Mammary epithelial cell (primary cell): ENCODE measurements at regions of chr6 and their contacts with region 1.

Region 1: DNA sequence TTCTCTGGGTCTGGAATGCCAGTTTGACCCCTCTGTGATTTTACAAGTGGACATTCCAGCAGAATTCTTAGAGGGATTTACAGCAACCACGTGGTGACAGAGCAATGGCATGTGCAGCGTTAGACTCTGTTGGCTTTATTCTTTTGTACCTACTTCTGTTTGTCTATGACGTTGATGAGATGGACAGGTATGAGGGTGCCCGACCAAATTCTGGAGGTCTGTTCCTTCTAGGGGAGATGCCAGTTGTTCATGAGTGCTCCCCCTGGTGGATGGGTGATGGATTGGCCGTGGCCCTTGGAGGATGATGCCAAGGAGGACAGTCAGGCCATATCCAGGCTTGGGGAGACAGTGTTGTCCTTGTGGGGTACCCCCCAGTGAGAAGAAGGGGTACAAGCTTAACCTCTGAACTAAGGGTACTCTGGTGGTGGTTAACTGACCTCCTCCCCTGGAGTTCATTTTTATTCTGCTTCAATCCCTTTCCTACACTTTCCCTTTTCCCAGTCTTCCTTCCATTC is 198.6 kb downstream of the DTNBP1 start:
- DNase-seq: no peak
- H3K4me3 ChIP-seq: no peak overlapping the region
- H3K27ac ChIP-seq: no peak overlapping the region
- H3K4me1 ChIP-seq: no peaks in the 10 kb centered on the region
- H3K27me3 ChIP-seq: no peaks in the 10 kb centered on the region
- CTCF ChIP-seq: peak; percentile 75 to 76

Region 2: DNA sequence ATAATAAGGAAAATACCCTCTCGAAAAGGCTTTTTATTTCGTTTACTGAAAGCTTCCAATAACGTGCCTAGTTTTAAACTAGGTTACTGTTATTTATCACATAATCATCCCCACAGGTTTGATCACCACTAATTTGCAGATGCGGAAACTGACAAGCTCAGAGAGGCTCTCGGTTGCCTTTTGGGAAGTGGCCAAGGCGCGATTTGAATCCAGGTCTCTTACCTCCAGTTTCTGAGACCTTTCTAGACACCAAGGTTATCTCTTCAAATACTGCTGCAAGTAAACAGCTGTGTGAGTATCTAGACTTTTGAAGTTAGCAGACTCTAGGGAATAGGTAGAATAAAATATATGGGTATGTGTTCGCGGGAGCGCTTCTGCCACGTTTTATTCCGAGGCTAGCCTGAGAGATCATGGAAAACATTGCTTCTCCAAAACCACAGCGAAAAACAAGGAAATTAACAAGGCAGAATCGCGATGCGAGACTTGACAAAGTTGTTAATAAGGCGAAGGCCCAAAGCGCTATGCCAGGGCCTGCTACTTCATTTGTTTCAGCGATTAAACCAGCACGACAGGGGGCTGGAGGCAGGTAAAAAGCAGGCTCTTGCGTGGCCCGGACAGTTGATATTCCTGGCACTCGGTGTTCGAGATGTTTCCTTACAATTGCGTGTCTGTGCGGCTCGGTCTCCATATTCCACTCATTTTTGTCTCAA is 220.2 kb before region 1 on chr6:
- CTCF ChIA-PET with region 1: no interaction called
- dilution Hi-C with region 1: no loop called
- in situ Hi-C with region 1: no loop called
- intact Hi-C with region 1: no loop called
- DNase-seq: no peak
- H3K4me3 ChIP-seq: peak overlapping the region in 2 of 3 experiments; percentile 53 to 95
- H3K27ac ChIP-seq: peak overlapping the region; percentile 43
- H3K4me1 ChIP-seq: peaks cover 14% of the 10 kb centered on the region
- H3K27me3 ChIP-seq: no peaks in the 10 kb centered on the region
- CTCF ChIP-seq: no peak

Region 3: GRCh38 chr6:15399641-15400470 is 64.4 kb before region 1 on chr6:
- CTCF ChIA-PET with region 1: no interaction called
- dilution Hi-C with region 1: loop called (anchors 5 kb)
- in situ Hi-C with region 1: no loop called
- intact Hi-C with region 1: no loop called
- DNase-seq: no peak
- H3K4me3 ChIP-seq: no peak overlapping the region
- H3K27ac ChIP-seq: no peak overlapping the region
- H3K4me1 ChIP-seq: peaks cover 12% of the 10 kb centered on the region
- H3K27me3 ChIP-seq: no peaks in the 10 kb centered on the region
- CTCF ChIP-seq: no peak